MCF 10A (cell line): ENCODE measurements at regions of chr3 and their contacts with region 1.

Region 1: GRCh38 chr3:17091910-17092585 is 207.3 kb downstream of the PLCL2 start:
- DNase-seq: no peak
- H3K4me3 Mint-ChIP-seq: no peak overlapping the region
- H3K27ac Mint-ChIP-seq: no peak overlapping the region
- H3K4me1 Mint-ChIP-seq: no peaks in the 10 kb centered on the region
- H3K27me3 Mint-ChIP-seq: no peaks in the 10 kb centered on the region
- CTCF ChIP-seq: no peak

Region 2: DNA sequence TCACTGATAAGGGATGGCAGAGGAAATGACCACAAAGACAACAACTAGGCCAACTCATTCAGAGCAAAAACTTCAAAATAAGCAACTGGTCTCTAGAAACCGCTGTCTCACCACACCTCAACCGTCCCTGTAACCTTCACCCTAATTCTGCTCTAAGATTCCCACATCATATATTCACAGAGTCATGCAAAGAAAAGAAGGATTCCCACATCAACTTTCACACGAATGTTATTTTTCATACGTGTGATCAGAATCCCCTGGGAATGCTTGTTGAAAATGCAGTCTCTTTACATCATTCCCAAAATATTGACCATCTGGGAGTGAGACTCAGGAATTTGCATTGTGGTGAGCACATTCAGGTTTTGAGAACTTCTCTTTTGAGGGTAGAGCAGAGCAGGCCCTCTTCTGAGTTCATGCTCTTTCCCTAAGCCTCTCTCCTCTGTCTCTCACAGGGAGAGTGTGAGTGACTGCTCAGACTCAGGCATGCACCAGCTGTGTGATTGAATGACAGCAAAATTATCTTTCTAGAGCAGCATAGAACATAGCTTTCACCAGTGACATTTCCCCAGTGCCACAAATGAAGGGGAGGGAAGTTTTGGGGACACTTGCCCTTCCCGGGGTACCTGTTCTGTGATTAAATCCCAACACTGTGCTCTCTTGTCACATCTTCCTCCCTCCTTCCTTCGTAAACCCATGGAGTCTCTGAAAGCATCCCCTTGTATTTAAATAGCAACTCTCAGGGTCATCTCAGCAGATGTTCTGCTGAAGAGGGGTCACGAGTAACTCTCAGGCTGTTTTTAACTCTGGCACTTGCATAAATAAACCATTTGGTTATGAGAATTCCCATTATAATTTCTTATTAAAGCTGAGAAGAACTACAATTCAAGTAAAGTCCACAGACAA is 36.4 kb before region 1 on chr3:
- CTCF ChIA-PET with region 1: no interaction called
- POLR2A ChIA-PET with region 1: no interaction called
- intact Hi-C with region 1: loop called (anchors 5 kb)
- DNase-seq: no peak
- H3K4me3 Mint-ChIP-seq: no peak overlapping the region
- H3K27ac Mint-ChIP-seq: no peak overlapping the region
- H3K4me1 Mint-ChIP-seq: no peaks in the 10 kb centered on the region
- H3K27me3 Mint-ChIP-seq: no peaks in the 10 kb centered on the region
- CTCF ChIP-seq: no peak